ENCODE measurements at regions of chr14 and their contacts with region 1.

Region 1: GRCh38 chr14:73463411-73463810 is 5.1 kb upstream of the NUMB start:
- DNase-seq: peak; percentile 43
- H3K4me3 Mint-ChIP-seq: peak overlapping the region; percentile 57
- H3K27ac Mint-ChIP-seq: peak overlapping the region; percentile 91
- H3K4me1 Mint-ChIP-seq: peaks cover 78% of the 10 kb centered on the region
- H3K27me3 Mint-ChIP-seq: no peaks in the 10 kb centered on the region

Region 2: DNA sequence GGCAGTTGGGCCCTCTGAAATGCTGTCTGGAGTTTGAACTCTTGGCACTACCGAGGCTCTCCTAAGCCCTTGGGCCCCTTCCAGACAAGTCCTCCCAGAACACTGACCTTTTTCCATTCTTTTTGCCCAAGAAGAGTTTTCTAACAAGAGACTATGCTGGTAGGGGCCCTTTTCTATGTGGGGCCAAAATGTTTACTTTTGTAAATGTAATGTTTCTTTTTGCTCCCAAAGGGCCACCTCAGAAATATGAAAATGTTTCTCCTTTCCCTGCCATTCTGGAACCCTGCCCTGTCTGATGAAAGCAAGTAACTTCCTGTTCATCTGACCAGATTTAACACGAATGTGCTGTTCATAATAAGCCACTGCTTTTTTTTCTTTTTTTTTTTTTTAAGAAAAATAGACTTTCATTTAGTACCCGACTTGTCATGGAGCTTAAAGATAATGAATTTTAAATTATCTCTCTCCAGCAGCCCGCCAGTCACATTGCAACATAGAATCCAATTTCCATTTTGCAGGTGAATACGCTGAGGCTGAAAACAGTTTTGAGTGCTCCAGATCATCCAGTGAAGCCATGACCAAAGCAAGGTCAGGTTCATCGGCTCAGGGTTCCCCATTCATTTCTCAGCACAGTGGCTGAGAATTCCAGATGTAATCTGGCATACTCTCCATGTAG is 739.4 kb before region 1 on chr14:
- intact Hi-C with region 1: no loop called
- DNase-seq: no peak
- H3K4me3 Mint-ChIP-seq: no peak overlapping the region
- H3K27ac Mint-ChIP-seq: no peak overlapping the region
- H3K4me1 Mint-ChIP-seq: peaks cover 18% of the 10 kb centered on the region
- H3K27me3 Mint-ChIP-seq: peaks cover 14% of the 10 kb centered on the region

Region 3: GRCh38 chr14:73239393-73240241 is 223.8 kb before region 1 on chr14:
- intact Hi-C with region 1: loop called (anchors 5 kb)
- DNase-seq: no peak
- H3K4me3 Mint-ChIP-seq: no peak overlapping the region
- H3K27ac Mint-ChIP-seq: peak overlapping the region; percentile 34
- H3K4me1 Mint-ChIP-seq: peaks cover 31% of the 10 kb centered on the region
- H3K27me3 Mint-ChIP-seq: peaks cover 77% of the 10 kb centered on the region

Region 4: DNA sequence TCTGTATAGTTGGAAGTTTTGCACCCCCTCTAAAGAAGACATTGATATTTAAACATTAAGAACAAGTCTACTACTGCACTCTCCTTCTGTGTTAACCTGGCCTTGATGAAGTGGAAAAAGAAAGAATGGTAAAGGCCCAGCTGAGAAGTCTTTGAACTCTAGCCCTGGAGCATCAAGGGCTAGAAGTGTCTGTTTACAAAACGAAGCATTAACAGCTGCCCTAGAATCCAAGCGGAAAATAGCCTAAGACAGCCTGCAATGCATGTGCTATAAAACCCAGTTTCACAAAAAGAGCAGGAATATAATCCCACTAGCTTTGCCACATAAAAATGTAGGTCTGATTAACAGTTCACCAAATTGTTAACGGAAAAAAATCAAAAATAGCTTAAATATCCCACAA is 65.6 kb before region 1 on chr14:
- intact Hi-C with region 1: no loop called
- DNase-seq: no peak
- H3K4me3 Mint-ChIP-seq: no peak overlapping the region
- H3K27ac Mint-ChIP-seq: no peak overlapping the region
- H3K4me1 Mint-ChIP-seq: peaks cover 5% of the 10 kb centered on the region
- H3K27me3 Mint-ChIP-seq: no peaks in the 10 kb centered on the region

Measured in activated T-helper 1 cell treated with anti-CD3 and anti-CD28 coated beads, Interleukin-12 subunit alpha, Interleukin-12 subunit beta, Interleukin-2, Interleukin-4 antibody, amounts not matched to agents 30 ng/mL and 10 ng/mL and 1 ng/mL, durations not matched to agents 14 hours and 24 hours and 36 hours (primary cell).